CD14-positive monocyte (primary cell): ENCODE measurements at regions of chrX and their contacts with region 1.

Region 1: DNA sequence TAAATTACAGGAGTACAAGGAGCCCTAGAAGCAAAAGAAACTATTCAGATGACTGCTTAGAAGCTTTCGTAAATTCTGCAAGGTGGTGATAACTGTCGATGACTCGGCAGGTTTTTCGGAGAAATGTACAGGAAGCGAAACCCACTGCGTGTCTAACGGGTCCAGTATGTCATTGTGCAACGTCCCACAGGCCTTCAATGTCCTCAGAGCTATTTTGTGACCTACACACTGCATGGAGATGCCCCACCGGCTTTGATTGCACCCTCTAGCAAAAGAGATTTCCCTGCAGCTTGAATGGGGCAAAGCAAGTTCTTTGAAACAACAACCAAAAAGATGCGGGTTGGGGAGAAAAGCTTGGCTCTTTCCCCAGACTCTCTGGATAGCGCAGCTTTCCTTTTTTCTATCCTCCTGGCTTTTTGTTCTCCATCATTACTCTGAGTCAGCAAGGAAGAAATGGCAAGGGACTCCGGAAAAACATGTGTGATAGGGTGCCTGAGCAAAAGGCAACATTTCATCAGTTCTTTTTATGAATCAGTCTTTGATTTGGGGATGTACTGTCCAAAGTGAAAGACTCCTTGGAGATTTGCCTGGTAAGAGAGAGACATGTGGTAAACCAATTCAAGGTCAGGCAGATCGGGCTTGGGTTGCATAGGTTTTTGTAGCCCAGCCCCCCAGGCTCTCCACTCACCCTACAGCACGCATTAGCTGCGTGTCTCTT is 112.0 kb upstream of the TBL1X start:
- DNase-seq: peak; percentile 86 to 91 (median 89)
- H3K4me3 ChIP-seq: peak overlapping the region in 2 of 3 experiments; percentile 33 to 69
- H3K4me3 Mint-ChIP-seq: peak overlapping the region; percentile 47 to 80
- H3K27ac ChIP-seq: peak overlapping the region; percentile 65 to 77
- H3K27ac Mint-ChIP-seq: peak overlapping the region; percentile 86 to 97 (median 95)
- H3K4me1 ChIP-seq: peaks cover 54 to 71% of the 10 kb centered on the region in 2 donors
- H3K4me1 Mint-ChIP-seq: peaks cover 59% of the 10 kb centered on the region
- H3K27me3 ChIP-seq: no peaks in the 10 kb centered on the region
- H3K27me3 Mint-ChIP-seq: peaks cover 0 to 11% (median 0%) of the 10 kb centered on the region in 3 donors
- CTCF ChIP-seq: no peak

Region 2: GRCh38 chrX:9241427-9241826 is 111.4 kb before region 1 on chrX:
- intact Hi-C with region 1: no loop called
- DNase-seq: no peak
- H3K4me3 ChIP-seq: no peak overlapping the region
- H3K4me3 Mint-ChIP-seq: no peak overlapping the region
- H3K27ac ChIP-seq: no peak overlapping the region
- H3K27ac Mint-ChIP-seq: peak overlapping the region in 1 of 7 donors; percentile 25
- H3K4me1 ChIP-seq: no peaks in the 10 kb centered on the region
- H3K4me1 Mint-ChIP-seq: peaks cover 5% of the 10 kb centered on the region
- H3K27me3 ChIP-seq: peaks cover 0 to 6% of the 10 kb centered on the region in 2 donors
- H3K27me3 Mint-ChIP-seq: peaks cover 0 to 30% (median 6%) of the 10 kb centered on the region in 3 donors
- CTCF ChIP-seq: no peak

Region 3: GRCh38 chrX:9279234-9279544 is 73.7 kb before region 1 on chrX:
- intact Hi-C with region 1: loop called in 1 of 2 experiments (anchors 10 kb)
- DNase-seq: peak; percentile 36 to 44 (median 38)
- H3K4me3 ChIP-seq: peak overlapping the region in 2 of 3 experiments; percentile 24 to 56
- H3K4me3 Mint-ChIP-seq: peak overlapping the region in 1 of 2 donors; percentile 83
- H3K27ac ChIP-seq: peak overlapping the region in 1 of 2 donors; percentile 83
- H3K27ac Mint-ChIP-seq: peak overlapping the region; percentile 82 to 94 (median 90)
- H3K4me1 ChIP-seq: peaks cover 51 to 52% of the 10 kb centered on the region in 2 donors
- H3K4me1 Mint-ChIP-seq: peaks cover 48% of the 10 kb centered on the region
- H3K27me3 ChIP-seq: no peaks in the 10 kb centered on the region
- H3K27me3 Mint-ChIP-seq: peaks cover 0 to 14% (median 0%) of the 10 kb centered on the region in 3 donors
- CTCF ChIP-seq: no peak

Region 4: DNA sequence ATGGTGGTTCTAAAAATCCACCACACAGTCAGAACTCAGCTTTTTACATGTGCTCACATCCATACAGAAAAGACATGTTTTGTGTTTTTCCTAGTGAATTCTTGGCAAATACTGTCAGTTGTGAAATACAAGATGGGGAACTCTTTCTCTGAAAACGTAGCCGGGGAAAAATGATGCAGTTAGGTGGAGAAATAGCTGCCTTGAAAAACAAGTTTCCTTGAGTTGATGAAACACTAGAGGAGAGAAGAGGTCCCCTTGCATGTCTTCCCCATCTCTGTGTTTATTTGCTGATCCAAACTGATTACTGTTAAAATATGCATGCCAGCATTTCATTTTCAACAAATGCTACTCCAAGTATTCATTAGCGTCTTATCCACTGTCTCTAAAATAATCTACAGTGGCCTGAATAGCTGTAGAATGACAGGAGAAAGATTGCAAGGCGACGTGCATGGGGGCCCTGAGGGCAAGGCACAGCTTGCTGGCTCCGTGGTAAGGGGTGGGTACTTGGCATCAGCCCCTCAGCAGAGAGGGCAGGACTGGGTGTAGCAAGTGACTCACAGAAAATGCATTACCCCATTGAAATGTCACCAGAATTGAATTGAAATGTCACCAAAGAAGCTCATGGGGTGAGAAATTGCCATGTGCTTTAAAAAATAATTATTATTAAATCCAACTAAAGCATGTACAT is 63.9 kb after region 1 on chrX:
- intact Hi-C with region 1: no loop called
- DNase-seq: peak in 2 of 3 donors; percentile 2 to 5
- H3K4me3 ChIP-seq: no peak overlapping the region
- H3K4me3 Mint-ChIP-seq: no peak overlapping the region
- H3K27ac ChIP-seq: no peak overlapping the region
- H3K27ac Mint-ChIP-seq: peak overlapping the region in 4 of 7 donors; percentile 2 to 56 (median 47)
- H3K4me1 ChIP-seq: peaks cover 0 to 6% of the 10 kb centered on the region in 2 donors
- H3K4me1 Mint-ChIP-seq: peaks cover 24% of the 10 kb centered on the region
- H3K27me3 ChIP-seq: peaks cover 0 to 13% of the 10 kb centered on the region in 2 donors
- H3K27me3 Mint-ChIP-seq: peaks cover 0 to 31% (median 0%) of the 10 kb centered on the region in 3 donors
- CTCF ChIP-seq: no peak